Endothelial cell of umbilical vein (primary cell): ENCODE measurements at regions of chr10 and their contacts with region 1.

Region 1: GRCh38 chr10:29517352-29517923 is 117.3 kb downstream of the SVIL start:
- DNase-seq: peak; percentile 22
- H3K4me3 ChIP-seq: no peak overlapping the region
- H3K27ac ChIP-seq: no peak overlapping the region
- H3K4me1 ChIP-seq: no peaks in the 10 kb centered on the region
- H3K27me3 ChIP-seq: no peaks in the 10 kb centered on the region
- CTCF ChIP-seq: peak; percentile 47 to 57
- POLR2A ChIP-seq: no peak

Region 2: GRCh38 chr10:28946479-28946878 is 571.0 kb before region 1 on chr10:
- CTCF ChIA-PET with region 1: no interaction called
- POLR2A ChIA-PET with region 1: no interaction called
- dilution Hi-C with region 1: no loop called
- intact Hi-C with region 1: no loop called
- DNase-seq: no peak
- H3K4me3 ChIP-seq: no peak overlapping the region
- H3K27ac ChIP-seq: no peak overlapping the region
- H3K4me1 ChIP-seq: no peaks in the 10 kb centered on the region
- H3K27me3 ChIP-seq: peaks cover 3 to 6% of the 10 kb centered on the region in 2 experiments
- CTCF ChIP-seq: no peak
- POLR2A ChIP-seq: no peak

Region 3: GRCh38 chr10:29496341-29497162 is 20.9 kb before region 1 on chr10:
- CTCF ChIA-PET with region 1: interaction called, 33 read pairs
- POLR2A ChIA-PET with region 1: no interaction called
- dilution Hi-C with region 1: no loop called
- intact Hi-C with region 1: no loop called
- DNase-seq: peak; percentile 72
- H3K4me3 ChIP-seq: no peak overlapping the region
- H3K27ac ChIP-seq: no peak overlapping the region
- H3K4me1 ChIP-seq: no peaks in the 10 kb centered on the region
- H3K27me3 ChIP-seq: no peaks in the 10 kb centered on the region
- CTCF ChIP-seq: peak; percentile 97 to 98
- POLR2A ChIP-seq: no peak

Region 4: GRCh38 chr10:29501692-29502091 is 15.7 kb before region 1 on chr10:
- CTCF ChIA-PET with region 1: interaction called, 33 read pairs
- POLR2A ChIA-PET with region 1: no interaction called
- dilution Hi-C with region 1: no loop called
- intact Hi-C with region 1: no loop called
- DNase-seq: no peak
- H3K4me3 ChIP-seq: no peak overlapping the region
- H3K27ac ChIP-seq: no peak overlapping the region
- H3K4me1 ChIP-seq: no peaks in the 10 kb centered on the region
- H3K27me3 ChIP-seq: no peaks in the 10 kb centered on the region
- CTCF ChIP-seq: no peak
- POLR2A ChIP-seq: no peak

Region 5: GRCh38 chr10:29535012-29535777 is 17.8 kb after region 1 on chr10:
- CTCF ChIA-PET with region 1: interaction called, 18 read pairs
- POLR2A ChIA-PET with region 1: no interaction called
- dilution Hi-C with region 1: no loop called
- intact Hi-C with region 1: no loop called
- DNase-seq: peak; percentile 55
- H3K4me3 ChIP-seq: no peak overlapping the region
- H3K27ac ChIP-seq: peak overlapping the region; percentile 17
- H3K4me1 ChIP-seq: peaks cover 9% of the 10 kb centered on the region
- H3K27me3 ChIP-seq: no peaks in the 10 kb centered on the region
- CTCF ChIP-seq: peak; percentile 65 to 70
- POLR2A ChIP-seq: no peak

Region 6: GRCh38 chr10:29585488-29585980 is 68.1 kb after region 1 on chr10:
- CTCF ChIA-PET with region 1: interaction called, 17 read pairs
- POLR2A ChIA-PET with region 1: no interaction called
- dilution Hi-C with region 1: no loop called
- intact Hi-C with region 1: loop called (anchors 1 kb)
- DNase-seq: peak; percentile 60
- H3K4me3 ChIP-seq: no peak overlapping the region
- H3K27ac ChIP-seq: peak overlapping the region; percentile 32
- H3K4me1 ChIP-seq: peaks cover 26% of the 10 kb centered on the region
- H3K27me3 ChIP-seq: no peaks in the 10 kb centered on the region
- CTCF ChIP-seq: no peak
- POLR2A ChIP-seq: no peak

Region 7: GRCh38 chr10:29590915-29591650 is 73.6 kb after region 1 on chr10:
- CTCF ChIA-PET with region 1: interaction called, 17 read pairs
- POLR2A ChIA-PET with region 1: no interaction called
- dilution Hi-C with region 1: no loop called
- intact Hi-C with region 1: loop called (anchors 1 kb)
- DNase-seq: no peak
- H3K4me3 ChIP-seq: no peak overlapping the region
- H3K27ac ChIP-seq: no peak overlapping the region
- H3K4me1 ChIP-seq: peaks cover 23% of the 10 kb centered on the region
- H3K27me3 ChIP-seq: no peaks in the 10 kb centered on the region
- CTCF ChIP-seq: no peak
- POLR2A ChIP-seq: no peak

Region 8: DNA sequence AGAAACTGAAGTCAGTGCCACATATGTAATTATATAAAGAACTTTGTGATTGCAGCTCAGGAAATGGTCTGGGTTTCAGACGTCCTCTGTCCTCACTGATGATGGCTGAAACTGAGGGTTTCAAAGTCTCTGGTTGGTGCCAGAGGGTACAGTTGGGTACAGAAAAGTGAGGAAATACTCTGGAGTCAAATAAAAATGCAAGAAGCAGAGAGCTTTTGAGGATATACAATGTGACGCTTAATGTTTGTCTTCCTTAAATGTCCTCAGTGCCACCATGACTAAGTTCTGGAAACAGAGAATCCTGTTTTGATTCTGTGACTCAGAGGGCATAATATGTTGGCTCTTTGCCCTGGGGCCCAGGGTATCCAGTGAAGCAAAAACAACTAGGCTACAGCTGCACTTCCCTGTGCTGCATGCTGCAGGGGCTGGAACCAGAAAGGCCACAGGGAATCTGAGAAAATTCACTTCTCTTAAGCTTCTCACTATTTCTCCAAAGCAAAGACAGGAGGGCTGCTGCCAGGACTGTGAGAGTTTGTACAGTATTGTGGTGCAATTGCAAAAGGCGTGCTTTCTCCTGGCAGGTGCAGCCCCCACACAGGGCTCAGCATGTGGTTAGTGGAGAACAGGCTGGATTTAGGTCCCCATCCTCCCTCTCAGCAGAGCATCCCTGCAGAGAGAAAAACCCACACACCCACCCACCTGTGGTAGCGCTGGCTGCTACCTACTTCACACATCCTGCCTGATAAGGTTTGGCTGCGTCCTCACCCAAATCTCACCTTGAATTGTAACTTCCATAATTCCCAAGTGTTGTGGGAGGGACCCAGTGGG is 286.8 kb after region 1 on chr10:
- CTCF ChIA-PET with region 1: no interaction called
- POLR2A ChIA-PET with region 1: no interaction called
- dilution Hi-C with region 1: no loop called
- intact Hi-C with region 1: no loop called
- DNase-seq: peak; percentile 99
- H3K4me3 ChIP-seq: peak overlapping the region in 1 of 3 experiments; percentile 31
- H3K27ac ChIP-seq: peak overlapping the region; percentile 99
- H3K4me1 ChIP-seq: peaks cover 54% of the 10 kb centered on the region
- H3K27me3 ChIP-seq: no peaks in the 10 kb centered on the region
- CTCF ChIP-seq: no peak
- POLR2A ChIP-seq: no peak